GM18951 (cell line): ENCODE measurements at regions of chr14 and their contacts with region 1.

Region 1: DNA sequence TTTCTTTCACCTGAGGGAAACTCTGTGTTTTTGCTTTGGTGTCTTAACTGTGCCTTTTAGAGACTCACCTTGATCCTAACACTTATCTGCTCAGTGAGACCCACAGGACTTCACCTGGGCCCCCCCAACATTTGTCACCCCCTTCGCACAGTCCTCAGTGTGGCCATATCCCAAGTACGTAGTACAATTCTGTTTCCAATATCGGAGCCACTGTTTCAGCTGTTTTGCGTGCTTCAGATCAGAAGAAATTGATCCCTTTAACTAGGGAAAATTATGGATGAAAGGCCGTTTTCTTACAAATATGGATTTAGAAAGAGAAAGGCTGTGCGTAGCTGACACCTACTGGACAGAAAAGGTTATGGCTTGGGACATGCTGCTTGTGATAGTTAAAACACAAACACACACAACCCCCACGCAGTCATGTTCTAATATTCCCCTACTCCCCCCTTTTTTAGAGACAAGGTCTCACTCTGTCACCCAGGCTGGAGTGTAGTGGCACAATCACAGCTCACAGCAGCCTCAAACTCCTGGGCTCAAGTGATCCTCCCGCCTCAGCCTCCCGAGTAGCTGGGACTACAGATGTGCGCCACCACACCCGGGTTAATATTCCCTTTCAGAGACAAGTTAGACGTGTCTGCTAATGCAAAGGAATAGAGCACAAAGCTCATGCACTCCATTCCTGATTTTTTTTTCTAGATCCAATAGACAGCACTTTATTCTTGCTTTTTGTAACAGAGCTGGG is 3.6 kb upstream of the SLC7A8 start:
- POLR2A ChIP-seq: no peak

Region 2: GRCh38 chr14:23120541-23121251 is 66.4 kb before region 1 on chr14:
- in situ Hi-C with region 1: loop called (anchors 10 kb)
- POLR2A ChIP-seq: no peak